ENCODE measurements at regions of chr5 and their contacts with region 1.

Region 1: GRCh38 chr5:54524704-54525103 is 7.1 kb downstream of the SNX18 start:
- DNase-seq: peak; percentile 33 to 65 (median 57)
- H3K4me3 ChIP-seq: peak overlapping the region; percentile 6
- H3K27ac ChIP-seq: peak overlapping the region; percentile 44 to 69
- H3K4me1 ChIP-seq: peaks cover 29% of the 10 kb centered on the region
- H3K27me3 ChIP-seq: no peaks in the 10 kb centered on the region
- CTCF ChIP-seq: no peak
- EP300 ChIP-seq: no peak
- POLR2A ChIP-seq: no peak

Region 2: DNA sequence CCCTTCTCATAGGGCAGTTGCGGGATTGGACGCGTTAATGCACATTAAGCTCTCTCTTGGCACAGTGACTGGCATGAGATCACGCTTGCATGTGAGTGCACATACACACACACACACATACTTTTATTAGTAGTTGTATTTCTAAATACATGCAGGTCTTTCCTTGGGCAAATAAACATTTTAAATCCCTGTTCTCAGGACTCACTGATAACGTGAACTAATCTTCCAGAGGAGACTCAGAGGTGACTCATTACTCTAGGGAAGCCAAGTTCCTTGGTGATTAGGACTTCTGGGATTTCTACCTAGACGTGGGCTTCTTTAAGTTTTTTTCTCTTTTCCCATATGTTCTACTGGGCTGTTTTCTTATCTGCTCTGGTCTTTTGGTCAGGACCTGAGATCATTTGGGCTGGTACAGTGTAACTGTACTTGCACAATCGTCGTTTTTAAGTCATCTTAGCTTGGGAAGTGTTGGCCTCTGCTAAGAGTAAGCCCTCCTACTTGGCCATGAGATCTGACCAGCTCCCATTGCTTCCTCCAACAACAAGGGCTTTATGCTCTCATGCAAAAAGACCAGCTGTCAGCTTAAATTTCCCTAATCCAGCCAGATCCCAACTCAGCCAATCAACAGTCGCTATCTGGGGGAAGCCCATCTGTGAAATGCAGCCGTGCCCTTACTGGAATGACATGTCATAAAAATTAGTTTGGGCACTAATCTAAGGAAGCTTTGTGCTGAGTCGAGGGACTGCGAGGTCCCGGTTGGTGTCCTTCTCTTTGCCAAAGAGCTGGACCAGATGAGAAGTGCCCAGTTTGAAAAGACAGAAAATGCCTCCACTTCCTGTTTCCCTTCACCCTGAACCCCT is 1884.9 kb after region 1 on chr5:
- intact Hi-C with region 1: loop called in 1 of 4 experiments (anchors 5 kb)
- DNase-seq: no peak
- H3K4me3 ChIP-seq: no peak overlapping the region
- H3K27ac ChIP-seq: no peak overlapping the region
- H3K4me1 ChIP-seq: no peaks in the 10 kb centered on the region
- H3K27me3 ChIP-seq: no peaks in the 10 kb centered on the region
- CTCF ChIP-seq: no peak
- EP300 ChIP-seq: no peak
- POLR2A ChIP-seq: no peak

Measured in ovary (tissue), 10 donors.